ENCODE measurements at regions of chr5 and their contacts with region 1.

Region 1: DNA sequence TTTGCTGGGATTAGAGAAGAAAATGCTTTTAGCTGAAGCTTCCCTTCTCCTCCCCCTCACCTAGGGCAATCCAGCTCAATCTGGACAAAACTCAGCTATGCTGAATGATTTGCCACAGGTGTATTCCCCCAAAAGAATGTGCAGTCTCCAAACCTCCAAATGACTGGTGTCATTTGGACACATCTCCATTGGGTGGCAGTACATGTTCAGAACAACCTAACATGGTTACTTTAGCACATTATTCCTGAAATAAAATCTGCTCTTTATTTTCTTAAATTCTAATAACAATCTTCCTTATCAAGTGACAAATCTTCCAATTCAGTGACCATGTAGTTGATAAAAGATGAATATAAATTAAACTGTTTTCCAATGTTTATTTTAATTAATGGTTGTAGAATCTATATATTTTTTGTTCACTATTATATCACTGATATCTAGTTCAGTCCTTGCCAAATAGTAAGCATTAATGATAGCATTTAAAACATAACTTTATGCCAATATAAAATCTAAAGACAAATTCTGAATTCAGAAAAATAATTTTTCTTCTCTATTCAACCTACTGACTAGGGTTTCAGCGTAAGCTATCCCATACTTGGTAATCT is 61.3 kb upstream of the MOCS2 start:
- DNase-seq: peak; percentile 63
- ATAC-seq: peak; percentile 90
- H3K4me3 ChIP-seq: no peak overlapping the region
- H3K27ac ChIP-seq: no peak overlapping the region
- H3K4me1 ChIP-seq: peaks cover 4% of the 10 kb centered on the region
- H3K27me3 ChIP-seq: no peaks in the 10 kb centered on the region
- CTCF ChIP-seq: peak; percentile 73
- POLR2A ChIP-seq: no peak
- RAD21 ChIP-seq: peak; percentile 93

Region 2: DNA sequence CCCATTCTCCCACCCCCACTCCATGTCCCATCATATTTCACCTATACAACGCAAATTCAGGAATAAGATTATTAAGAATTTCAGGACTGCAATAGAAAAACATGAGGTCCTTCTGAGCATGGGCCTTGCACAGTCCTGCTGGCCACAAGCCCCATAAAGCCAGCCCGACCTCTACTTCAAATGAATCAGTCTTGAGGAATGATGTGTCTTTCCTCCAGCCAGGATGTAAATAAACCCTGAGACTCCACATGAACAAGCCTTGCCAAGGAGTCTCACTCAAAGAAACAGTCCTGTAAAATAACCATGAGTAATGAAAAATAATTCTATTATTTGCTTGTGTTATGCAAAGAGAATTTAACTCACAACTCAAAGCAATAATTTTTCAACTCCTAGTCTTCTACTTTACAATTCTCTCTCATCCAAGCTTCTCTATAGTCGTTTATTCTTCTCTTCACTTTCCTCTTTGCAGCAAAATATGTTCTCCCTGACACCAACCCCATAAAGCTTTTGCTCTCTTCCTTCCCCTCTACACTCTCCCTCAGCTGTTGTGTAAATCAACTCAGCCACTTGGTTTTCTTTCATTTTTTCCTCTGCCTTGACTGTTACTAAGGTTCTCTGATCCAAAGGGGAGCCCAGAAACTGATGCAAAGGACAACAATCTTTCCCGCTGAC is 78.8 kb after region 1 on chr5:
- CTCF ChIA-PET with region 1: interaction called, 3 read pairs
- POLR2A ChIA-PET with region 1: no interaction called
- dilution Hi-C with region 1: no loop called
- in situ Hi-C with region 1: no loop called
- intact Hi-C with region 1: loop called (anchors 2 kb)
- DNase-seq: peak; percentile 98
- ATAC-seq: peak; percentile 76
- H3K4me3 ChIP-seq: no peak overlapping the region
- H3K27ac ChIP-seq: peak overlapping the region; percentile 92
- H3K4me1 ChIP-seq: peaks cover 16% of the 10 kb centered on the region
- H3K27me3 ChIP-seq: no peaks in the 10 kb centered on the region
- CTCF ChIP-seq: no peak
- POLR2A ChIP-seq: no peak
- RAD21 ChIP-seq: no peak

Region 3: DNA sequence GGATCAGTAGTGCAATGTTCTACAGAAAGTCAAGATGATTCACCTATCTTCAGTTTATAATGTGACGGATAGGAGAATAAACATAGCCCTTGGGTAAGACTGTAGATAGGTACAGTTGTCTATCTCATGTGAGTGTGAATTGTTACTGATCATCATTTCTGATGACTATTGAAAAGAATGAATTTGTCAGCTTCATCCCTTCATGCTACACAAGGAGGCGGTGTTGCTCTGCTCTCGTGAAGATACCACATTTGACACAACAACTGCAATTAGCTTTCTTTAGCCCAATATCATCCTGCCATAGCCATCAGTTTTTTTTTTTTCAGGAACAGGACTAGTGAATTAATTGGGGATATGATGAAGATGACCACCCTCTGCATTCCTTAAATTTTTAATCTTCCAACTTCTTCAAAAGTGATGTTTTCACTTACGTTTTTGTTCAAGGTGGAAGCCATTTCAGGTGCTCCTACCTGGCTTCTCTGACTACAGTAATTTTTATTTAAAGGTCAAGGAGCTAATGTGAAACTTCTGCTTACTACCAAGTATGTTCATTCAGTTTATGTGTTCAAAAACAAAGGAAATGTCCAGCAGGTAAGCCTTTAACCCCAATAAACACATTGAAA is 91.6 kb after region 1 on chr5:
- CTCF ChIA-PET with region 1: interaction called, 6 read pairs
- POLR2A ChIA-PET with region 1: no interaction called
- dilution Hi-C with region 1: no loop called
- in situ Hi-C with region 1: no loop called
- intact Hi-C with region 1: loop called (anchors 1 kb)
- DNase-seq: peak; percentile 72
- ATAC-seq: peak; percentile 80
- H3K4me3 ChIP-seq: no peak overlapping the region
- H3K27ac ChIP-seq: no peak overlapping the region
- H3K4me1 ChIP-seq: peaks cover 2% of the 10 kb centered on the region; the same call in 1 of the 2 replicates
- H3K27me3 ChIP-seq: no peaks in the 10 kb centered on the region
- CTCF ChIP-seq: peak; percentile 90
- POLR2A ChIP-seq: peak; percentile 50; the same call in 1 of the 2 replicates
- RAD21 ChIP-seq: peak; percentile 96

Region 4: GRCh38 chr5:53362521-53362941 is 191.7 kb after region 1 on chr5:
- CTCF ChIA-PET with region 1: no interaction called
- POLR2A ChIA-PET with region 1: no interaction called
- dilution Hi-C with region 1: no loop called
- in situ Hi-C with region 1: no loop called
- intact Hi-C with region 1: loop called (anchors 10 kb)
- DNase-seq: peak; percentile 97
- ATAC-seq: peak; percentile 70
- H3K4me3 ChIP-seq: no peak overlapping the region
- H3K27ac ChIP-seq: peak overlapping the region; percentile 93
- H3K4me1 ChIP-seq: peaks cover 16% of the 10 kb centered on the region
- H3K27me3 ChIP-seq: no peaks in the 10 kb centered on the region
- CTCF ChIP-seq: no peak
- POLR2A ChIP-seq: no peak
- RAD21 ChIP-seq: no peak

Region 5: GRCh38 chr5:53430261-53431252 is 259.7 kb after region 1 on chr5:
- CTCF ChIA-PET with region 1: no interaction called
- POLR2A ChIA-PET with region 1: no interaction called
- dilution Hi-C with region 1: no loop called
- in situ Hi-C with region 1: no loop called
- intact Hi-C with region 1: loop called (anchors 1 kb)
- DNase-seq: peak; percentile 87
- ATAC-seq: peak; percentile 67
- H3K4me3 ChIP-seq: no peak overlapping the region
- H3K27ac ChIP-seq: peak overlapping the region; percentile 80
- H3K4me1 ChIP-seq: peaks cover 14% of the 10 kb centered on the region
- H3K27me3 ChIP-seq: no peaks in the 10 kb centered on the region
- CTCF ChIP-seq: peak; percentile 82
- POLR2A ChIP-seq: peak; percentile 48; the same call in 1 of the 2 replicates
- RAD21 ChIP-seq: peak; percentile 88

Region 6: GRCh38 chr5:54234304-54234933 is 1063.6 kb after region 1 on chr5:
- CTCF ChIA-PET with region 1: interaction called, 3 read pairs
- POLR2A ChIA-PET with region 1: no interaction called
- dilution Hi-C with region 1: no loop called
- in situ Hi-C with region 1: loop called (anchors 5 kb)
- intact Hi-C with region 1: no loop called
- DNase-seq: peak; percentile 73
- ATAC-seq: peak; percentile 70
- H3K4me3 ChIP-seq: no peak overlapping the region
- H3K27ac ChIP-seq: no peak overlapping the region
- H3K4me1 ChIP-seq: no peaks in the 10 kb centered on the region
- H3K27me3 ChIP-seq: no peaks in the 10 kb centered on the region; the same call in 1 of the 2 replicates
- CTCF ChIP-seq: peak; percentile 70
- POLR2A ChIP-seq: no peak
- RAD21 ChIP-seq: peak; percentile 57

Measured in IMR-90 (cell line).